Mammary epithelial cell (primary cell): ENCODE measurements at regions of chr3 and their contacts with region 1.

Region 1: GRCh38 chr3:42012935-42013690 is 51.2 kb upstream of the ULK4 start:
- DNase-seq: peak; percentile 65
- H3K4me3 ChIP-seq: peak overlapping the region; percentile 51 to 91 (median 85)
- H3K27ac ChIP-seq: peak overlapping the region; percentile 20
- H3K4me1 ChIP-seq: peaks cover 15% of the 10 kb centered on the region
- H3K27me3 ChIP-seq: no peaks in the 10 kb centered on the region
- CTCF ChIP-seq: no peak

Region 2: DNA sequence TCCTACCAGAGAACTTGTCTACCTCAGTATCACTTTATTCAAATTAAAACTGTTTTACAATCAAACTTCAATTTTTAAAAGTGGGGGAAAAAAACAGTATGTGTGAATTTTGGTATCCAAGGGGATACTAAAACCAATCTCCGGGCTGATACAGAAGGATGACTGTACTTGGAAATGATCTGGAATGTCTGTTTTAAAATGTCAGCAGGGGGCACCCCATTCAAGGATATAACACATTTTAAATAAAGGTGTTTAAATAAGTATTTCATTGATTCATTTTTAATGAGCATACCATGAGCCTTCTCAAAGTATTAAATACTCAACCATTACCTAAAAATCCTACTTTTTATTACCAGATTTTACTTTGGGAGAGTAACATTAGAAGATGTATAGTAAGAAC is 119.1 kb before region 1 on chr3:
- CTCF ChIA-PET with region 1: no interaction called
- dilution Hi-C with region 1: no loop called
- in situ Hi-C with region 1: no loop called
- intact Hi-C with region 1: loop called (anchors 2 kb)
- DNase-seq: peak; percentile 36
- H3K4me3 ChIP-seq: no peak overlapping the region
- H3K27ac ChIP-seq: no peak overlapping the region
- H3K4me1 ChIP-seq: no peaks in the 10 kb centered on the region
- H3K27me3 ChIP-seq: no peaks in the 10 kb centered on the region
- CTCF ChIP-seq: peak; percentile 29 to 54

Region 3: DNA sequence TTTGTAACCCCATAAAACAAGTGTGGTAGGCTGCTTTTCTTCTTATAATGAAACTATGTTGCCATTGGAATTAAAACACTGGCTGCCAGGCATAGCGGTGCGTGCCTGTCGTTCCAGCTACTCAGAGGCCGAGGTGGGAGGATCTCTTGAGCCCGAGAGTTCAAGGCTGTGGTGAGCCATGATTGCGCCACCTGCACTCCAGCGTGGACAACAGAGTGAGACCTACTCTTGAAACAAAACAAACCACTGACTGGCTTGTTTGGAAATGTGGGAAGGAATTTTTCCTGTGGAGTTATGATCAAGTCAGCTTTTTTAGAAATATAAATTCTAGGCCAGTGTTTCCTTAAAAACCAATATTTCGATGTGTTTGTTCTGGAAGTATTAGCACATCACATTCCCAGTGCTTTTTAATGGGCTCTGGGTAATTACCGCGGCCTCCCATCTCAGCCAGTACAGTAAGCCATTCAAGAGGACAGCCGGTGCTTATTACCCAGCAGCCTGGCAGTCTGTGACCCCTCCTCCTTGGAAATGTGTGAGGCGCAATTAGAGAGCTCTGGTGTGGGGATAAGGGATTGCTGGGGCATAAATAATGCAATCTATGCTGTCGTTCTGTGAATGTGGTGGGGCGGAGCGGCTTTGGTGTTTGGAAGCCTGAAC is 19.7 kb after region 1 on chr3:
- CTCF ChIA-PET with region 1: interaction called, 21 read pairs
- dilution Hi-C with region 1: no loop called
- in situ Hi-C with region 1: no loop called
- intact Hi-C with region 1: no loop called
- DNase-seq: peak; percentile 66
- H3K4me3 ChIP-seq: no peak overlapping the region
- H3K27ac ChIP-seq: no peak overlapping the region
- H3K4me1 ChIP-seq: peaks cover 46% of the 10 kb centered on the region
- H3K27me3 ChIP-seq: no peaks in the 10 kb centered on the region
- CTCF ChIP-seq: no peak

Region 4: DNA sequence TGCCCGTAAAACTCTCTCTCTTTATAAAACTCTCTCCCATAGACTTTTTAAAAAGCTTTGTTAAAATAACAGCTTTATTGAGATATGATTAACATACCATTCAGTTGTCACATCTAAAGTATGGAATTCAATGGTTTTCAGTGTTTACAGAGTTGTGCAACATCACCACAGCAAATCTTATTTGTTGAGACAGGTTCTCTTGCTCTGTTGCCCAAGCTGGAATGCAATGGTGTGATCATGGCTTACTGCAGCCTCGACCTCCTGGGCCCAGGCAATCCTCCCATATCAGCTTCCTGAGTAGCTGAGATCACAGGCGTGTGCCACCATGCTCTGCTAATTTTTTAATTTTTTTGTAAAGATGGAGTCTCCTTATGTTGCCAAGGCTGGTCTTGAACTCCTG is 42.2 kb after region 1 on chr3:
- CTCF ChIA-PET with region 1: no interaction called
- dilution Hi-C with region 1: no loop called
- in situ Hi-C with region 1: no loop called
- intact Hi-C with region 1: loop called (anchors 1 kb)
- DNase-seq: peak; percentile 89
- H3K4me3 ChIP-seq: no peak overlapping the region
- H3K27ac ChIP-seq: peak overlapping the region; percentile 62
- H3K4me1 ChIP-seq: peaks cover 30% of the 10 kb centered on the region
- H3K27me3 ChIP-seq: no peaks in the 10 kb centered on the region
- CTCF ChIP-seq: no peak

Region 5: DNA sequence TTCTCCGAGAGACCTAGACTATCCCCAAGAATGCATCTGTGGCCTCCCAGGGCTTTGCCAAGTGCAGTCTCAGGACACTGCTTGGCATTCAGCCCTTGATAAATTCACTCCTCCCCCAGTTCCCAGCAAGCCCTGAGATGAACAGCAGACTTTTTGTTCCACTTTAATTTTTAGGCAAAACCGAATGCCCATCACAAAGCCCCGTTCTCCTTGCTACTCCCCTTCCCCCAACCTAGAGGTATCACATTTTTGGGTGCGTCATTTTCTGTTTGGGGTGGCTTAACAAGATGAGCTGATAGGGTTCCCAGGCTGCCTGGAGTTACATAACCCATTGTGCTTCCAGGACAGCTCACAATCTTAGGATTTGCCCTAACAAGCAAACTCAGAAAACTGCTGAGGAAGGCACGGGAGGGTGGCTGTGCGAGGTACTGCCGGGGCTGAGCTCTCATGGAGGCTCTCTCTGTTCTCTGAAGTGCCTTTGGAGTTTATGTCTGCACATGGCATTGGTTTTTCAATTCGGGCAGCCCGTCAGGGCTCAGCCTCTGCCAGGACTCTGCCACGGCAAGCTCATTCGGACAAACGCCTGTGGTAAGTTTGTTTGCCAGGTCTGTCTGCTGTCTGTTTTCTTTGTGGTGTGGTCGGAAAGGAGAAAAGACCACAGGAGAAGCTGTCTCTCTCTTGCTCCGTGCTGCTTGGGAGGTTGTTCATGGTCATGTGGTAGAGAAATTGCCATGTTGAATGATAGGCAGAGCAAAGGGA is 78.0 kb after region 1 on chr3 and contains the start of gene TRAK1:
- CTCF ChIA-PET with region 1: interaction called, 3 read pairs
- dilution Hi-C with region 1: no loop called
- in situ Hi-C with region 1: loop called in 1 of 2 experiments (anchors 10 kb)
- intact Hi-C with region 1: no loop called
- DNase-seq: peak; percentile 95
- H3K4me3 ChIP-seq: peak within 1 kb of the TSS; percentile 37 to 58 (median 54)
- H3K27ac ChIP-seq: peak within 1 kb of the TSS; percentile 79
- H3K4me1 ChIP-seq: peaks cover 17% of the 10 kb centered on the region
- H3K27me3 ChIP-seq: no peaks in the 10 kb centered on the region
- CTCF ChIP-seq: peak in 1 of 2 donors; percentile 20
- total RNA-seq, gene TRAK1: 64.5 to 67.2 TPM